GM10248 (cell line): ENCODE measurements at regions of chr9 and their contacts with region 1.

Region 1: DNA sequence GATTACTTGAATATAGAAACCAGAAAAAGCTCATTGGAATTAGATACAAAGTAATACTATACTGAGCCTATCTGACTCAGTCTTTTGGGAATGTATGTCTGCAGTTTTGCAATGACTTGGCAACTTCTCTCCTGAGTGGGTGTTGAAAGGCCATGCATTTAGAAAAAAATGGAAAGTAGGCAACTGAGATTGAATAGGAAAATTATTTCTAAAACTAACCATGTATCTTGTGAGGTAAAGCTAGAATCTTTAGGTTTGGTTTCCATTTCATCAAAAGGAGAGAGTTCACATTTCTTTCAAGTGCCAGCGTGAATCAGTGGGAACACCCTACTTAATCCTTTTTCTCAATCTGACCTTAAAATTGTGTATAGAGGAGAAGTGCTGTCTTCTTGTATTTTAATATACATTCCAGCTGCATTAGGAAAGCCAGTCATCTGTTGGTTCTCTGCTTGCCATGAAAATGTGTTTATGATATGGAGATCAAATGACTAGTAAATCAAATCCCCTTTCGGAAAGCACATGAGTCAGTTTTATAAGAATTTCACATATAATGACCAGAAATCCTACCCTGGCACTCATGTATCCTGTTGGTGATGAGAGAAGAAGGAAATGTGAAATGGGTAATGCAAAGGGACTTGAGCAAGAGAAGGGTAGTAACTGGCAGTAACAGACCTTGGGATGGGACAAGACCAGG is 30.4 kb downstream of the NFX1 start:
- DNase-seq: no peak
- CTCF ChIP-seq: no peak

Region 2: DNA sequence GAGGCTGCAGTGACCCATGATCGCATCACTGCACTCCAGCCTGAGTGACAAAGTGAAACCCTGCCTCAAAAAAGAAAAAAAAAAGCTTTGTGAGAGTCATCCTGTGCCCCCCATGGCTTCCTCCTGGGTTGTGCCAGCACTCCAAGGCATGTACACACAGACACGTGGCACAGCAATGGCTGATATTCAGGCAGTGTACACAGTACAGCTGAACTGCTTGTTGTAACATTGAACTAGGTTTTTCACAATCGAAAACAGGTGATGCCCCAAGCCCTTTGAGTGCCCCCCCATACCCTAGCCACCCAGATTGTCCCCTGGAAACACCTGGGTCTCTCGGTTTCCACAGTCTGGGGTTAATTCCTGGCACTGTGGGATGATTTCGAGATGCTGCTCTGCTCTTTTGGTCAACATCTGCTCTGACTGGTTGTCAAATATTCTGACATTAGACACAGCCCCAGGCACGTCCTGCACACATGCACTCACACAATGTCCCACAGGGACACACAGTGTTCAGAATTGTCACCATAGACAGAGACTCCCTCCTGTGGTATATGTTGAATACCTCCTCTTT is 71.5 kb before region 1 on chr9:
- CTCF ChIA-PET with region 1: no interaction called
- POLR2A ChIA-PET with region 1: no interaction called
- DNase-seq: no peak
- CTCF ChIP-seq: no peak

Region 3: GRCh38 chr9:33304362-33304761 is 16.4 kb before region 1 on chr9:
- CTCF ChIA-PET with region 1: interaction called, 17 read pairs
- POLR2A ChIA-PET with region 1: interaction called, 3 read pairs
- DNase-seq: peak; percentile 25
- CTCF ChIP-seq: no peak

Region 4: DNA sequence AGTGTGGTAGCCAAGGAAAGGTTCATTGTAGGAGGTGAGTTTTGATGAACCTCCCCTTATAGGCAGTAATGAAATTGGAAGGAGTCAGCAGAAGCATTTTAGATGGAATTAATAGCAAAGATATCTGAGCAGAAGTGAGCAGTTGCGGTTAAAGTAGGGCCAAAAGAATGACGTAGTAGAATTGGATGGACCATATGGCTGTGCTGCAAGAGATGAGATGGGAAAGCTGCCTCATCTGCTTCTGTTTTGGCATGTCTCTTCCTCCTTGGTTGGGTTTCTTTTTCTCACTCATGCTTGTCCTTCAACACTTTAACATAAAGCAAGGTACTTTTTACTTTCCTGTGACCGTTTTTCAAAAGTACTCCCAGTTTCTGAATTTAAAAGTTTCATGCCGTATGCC is 25.8 kb after region 1 on chr9:
- CTCF ChIA-PET with region 1: no interaction called
- POLR2A ChIA-PET with region 1: no interaction called
- DNase-seq: no peak
- CTCF ChIP-seq: no peak

Region 5: GRCh38 chr9:33619666-33620404 is 299.1 kb after region 1 on chr9:
- CTCF ChIA-PET with region 1: no interaction called
- POLR2A ChIA-PET with region 1: no interaction called
- DNase-seq: no peak
- CTCF ChIP-seq: no peak